Activated CD4-positive, alpha-beta T cell treated with anti-CD3 and anti-CD28 coated beads, Interleukin-2, amount 10 ng/mL, durations not matched to agents 24 days and 14 days (primary cell): ENCODE measurements at regions of chr10 and their contacts with region 1.

Region 1: DNA sequence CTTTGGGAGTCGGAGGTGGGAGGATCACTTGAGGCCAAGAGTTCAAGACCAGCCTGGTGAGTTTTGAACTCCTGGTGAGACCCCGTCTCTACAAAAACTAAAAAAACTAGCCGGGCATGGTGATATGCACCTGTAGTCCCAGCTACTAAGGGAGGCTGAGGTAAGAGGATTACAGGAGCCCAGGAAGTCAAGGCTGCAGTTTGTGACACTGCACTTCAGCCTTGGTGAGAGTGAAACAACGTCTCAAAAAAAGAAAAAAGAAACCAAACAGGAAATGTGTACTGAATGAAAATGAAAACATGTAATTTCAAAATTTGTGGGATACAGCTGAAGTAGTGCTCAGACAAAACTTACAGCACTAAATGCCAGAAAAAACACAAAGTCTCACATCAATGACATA is 7.6 kb downstream of the ARHGAP12 start:
- DNase-seq: peak; percentile 71
- H3K4me3 Mint-ChIP-seq: peak overlapping the region; percentile 72
- H3K27ac Mint-ChIP-seq: peak overlapping the region; percentile 75
- H3K4me1 Mint-ChIP-seq: peaks cover 30% of the 10 kb centered on the region
- H3K27me3 Mint-ChIP-seq: peaks cover 2% of the 10 kb centered on the region

Region 2: GRCh38 chr10:31875608-31876007 is 45.4 kb before region 1 on chr10:
- intact Hi-C with region 1: loop called (anchors 5 kb)
- DNase-seq: no peak
- H3K4me3 Mint-ChIP-seq: no peak overlapping the region
- H3K27ac Mint-ChIP-seq: no peak overlapping the region
- H3K4me1 Mint-ChIP-seq: peaks cover 12% of the 10 kb centered on the region
- H3K27me3 Mint-ChIP-seq: no peaks in the 10 kb centered on the region